Heart right ventricle (tissue), 16 donors: ENCODE measurements at regions of chr9 and their contacts with region 1.

Region 1: GRCh38 chr9:99012942-99013512 is 69.3 kb downstream of the COL15A1 start:
- DNase-seq: no peak
- ATAC-seq: peak; percentile 58 to 89 (median 78)
- H3K4me3 ChIP-seq: no peak overlapping the region
- H3K27ac ChIP-seq: peak overlapping the region in 1 of 10 donors; percentile 24
- H3K4me1 ChIP-seq: peaks cover 0 to 6% (median 0%) of the 10 kb centered on the region in 9 donors
- H3K27me3 ChIP-seq: no peaks in the 10 kb centered on the region
- CTCF ChIP-seq: peak; percentile 29 to 69 (median 60)

Region 2: DNA sequence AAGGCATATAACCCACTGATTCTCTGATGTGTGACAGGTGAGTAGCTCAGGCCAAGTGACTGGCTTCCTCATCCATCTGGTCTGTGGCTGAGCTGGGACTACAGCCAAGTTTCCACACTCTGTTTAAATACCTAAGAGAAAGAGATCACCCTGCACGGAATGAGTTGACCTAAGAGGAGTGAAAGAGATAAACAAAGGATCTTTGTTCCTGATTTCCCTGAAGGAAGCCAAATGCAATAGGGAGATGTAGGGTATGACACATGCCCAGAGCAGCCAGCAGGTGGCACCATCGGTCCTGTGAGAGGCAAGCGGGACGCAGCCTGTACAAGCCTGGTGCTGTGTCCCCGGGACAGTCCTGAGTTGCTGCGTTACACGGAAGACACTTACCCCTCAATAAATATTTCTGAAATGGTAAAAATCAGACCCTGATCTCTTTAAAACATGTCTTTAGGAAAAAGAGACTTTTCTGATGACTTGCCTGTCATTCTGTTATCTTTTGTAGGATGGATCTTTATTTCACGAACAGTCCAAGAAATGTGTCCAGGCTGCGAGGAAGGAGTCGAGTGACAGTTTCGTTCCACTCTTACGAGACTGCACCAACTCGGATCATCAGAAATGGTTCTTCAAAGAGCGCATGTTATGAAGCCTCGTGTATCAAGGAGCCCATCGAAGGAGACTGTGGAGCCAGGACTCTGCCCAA is 164.4 kb before region 1 on chr9:
- intact Hi-C with region 1: loop called in 3 of 10 experiments (anchors 2 to 10 kb)
- DNase-seq: peak; percentile 89 to 92
- ATAC-seq: peak; percentile 95 to 99 (median 98)
- H3K4me3 ChIP-seq: peak overlapping the region; percentile 15 to 50 (median 35)
- H3K27ac ChIP-seq: peak overlapping the region in 6 of 10 donors; percentile 13 to 50 (median 40)
- H3K4me1 ChIP-seq: peaks cover 0 to 17% (median 6%) of the 10 kb centered on the region in 9 donors
- H3K27me3 ChIP-seq: peaks cover 0 to 3% (median 0%) of the 10 kb centered on the region in 7 donors
- CTCF ChIP-seq: peak; percentile 73 to 98 (median 95)